ENCODE measurements at regions of chr7 and their contacts with region 1.

Region 1: GRCh38 chr7:74083117-74083876 is at the start of gene LIMK1:
- DNase-seq: peak; percentile 68 to 91 (median 81)
- ATAC-seq: peak; percentile 97
- H3K4me3 ChIP-seq: peak within 1 kb of the TSS; percentile 61
- H3K4me3 Mint-ChIP-seq: peak within 1 kb of the TSS; percentile 81
- H3K27ac ChIP-seq: peak within 1 kb of the TSS in 1 of 2 experiments; percentile 36
- H3K27ac Mint-ChIP-seq: no peak within 1 kb of the TSS
- H3K4me1 ChIP-seq: peaks cover 12% of the 10 kb centered on the region
- H3K4me1 Mint-ChIP-seq: peaks cover 9% of the 10 kb centered on the region
- H3K27me3 ChIP-seq: no peaks in the 10 kb centered on the region
- H3K27me3 Mint-ChIP-seq: no peaks in the 10 kb centered on the region
- CTCF ChIP-seq: no peak
- total RNA-seq, gene LIMK1: 12.8 to 13.7 TPM

Region 2: DNA sequence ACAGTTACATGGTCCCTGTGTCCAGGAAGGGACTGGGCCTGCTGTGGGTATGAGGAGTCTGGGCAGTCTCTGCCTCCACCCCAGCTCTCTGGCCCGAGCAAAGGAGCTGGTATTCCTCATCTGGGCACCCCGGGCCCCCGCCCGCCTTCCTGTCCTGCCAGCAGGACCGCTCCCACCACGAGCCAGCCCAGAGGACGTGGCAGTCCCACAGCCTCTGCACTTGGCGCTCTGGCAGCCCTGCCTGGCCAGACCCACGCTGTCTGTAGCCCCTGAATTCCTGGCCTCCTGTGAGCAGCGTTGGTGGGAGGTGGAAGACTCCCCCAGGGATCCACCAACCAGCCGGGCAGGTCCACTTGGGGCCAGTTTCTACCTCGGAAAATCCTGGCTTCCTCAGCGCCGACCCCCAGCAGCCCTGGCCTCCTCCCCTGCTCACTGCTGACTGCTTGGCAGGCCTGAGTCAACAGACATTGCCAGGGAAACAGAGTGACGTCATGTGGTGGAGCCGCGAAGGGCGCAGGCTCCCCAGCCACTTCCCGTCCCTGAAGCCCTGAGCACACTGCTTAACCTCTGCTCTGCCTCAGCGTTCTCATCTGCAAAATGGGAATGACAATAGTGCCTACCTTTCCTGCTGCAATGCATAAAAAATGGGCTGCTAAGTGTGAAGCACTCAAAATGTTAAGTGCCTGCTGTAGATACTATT is 21.3 kb before region 1 on chr7:
- CTCF ChIA-PET with region 1: interaction called, 3 read pairs
- POLR2A ChIA-PET with region 1: no interaction called
- intact Hi-C with region 1: loop called in 1 of 2 experiments (anchors 1 kb)
- DNase-seq: peak; percentile 53 to 90 (median 71)
- ATAC-seq: peak; percentile 98
- H3K4me3 ChIP-seq: no peak overlapping the region
- H3K4me3 Mint-ChIP-seq: peak overlapping the region; percentile 5
- H3K27ac ChIP-seq: peak overlapping the region; percentile 52 to 61
- H3K27ac Mint-ChIP-seq: peak overlapping the region; percentile 41
- H3K4me1 ChIP-seq: no peaks in the 10 kb centered on the region
- H3K4me1 Mint-ChIP-seq: peaks cover 4% of the 10 kb centered on the region
- H3K27me3 ChIP-seq: no peaks in the 10 kb centered on the region
- H3K27me3 Mint-ChIP-seq: peaks cover 7% of the 10 kb centered on the region
- CTCF ChIP-seq: no peak

Region 3: GRCh38 chr7:74094224-74095101 is 11.2 kb after region 1 on chr7:
- CTCF ChIA-PET with region 1: no interaction called
- POLR2A ChIA-PET with region 1: interaction called, 9 read pairs
- intact Hi-C with region 1: loop called in 1 of 2 experiments (anchors 1 kb)
- DNase-seq: peak; percentile 34 to 88 (median 78)
- ATAC-seq: peak; percentile 74
- H3K4me3 ChIP-seq: peak overlapping the region; percentile 43 to 57
- H3K4me3 Mint-ChIP-seq: peak overlapping the region; percentile 83
- H3K27ac ChIP-seq: peak overlapping the region; percentile 72 to 89
- H3K27ac Mint-ChIP-seq: peak overlapping the region; percentile 94
- H3K4me1 ChIP-seq: peaks cover 27% of the 10 kb centered on the region
- H3K4me1 Mint-ChIP-seq: peaks cover 23% of the 10 kb centered on the region
- H3K27me3 ChIP-seq: no peaks in the 10 kb centered on the region
- H3K27me3 Mint-ChIP-seq: no peaks in the 10 kb centered on the region
- CTCF ChIP-seq: no peak

Region 4: DNA sequence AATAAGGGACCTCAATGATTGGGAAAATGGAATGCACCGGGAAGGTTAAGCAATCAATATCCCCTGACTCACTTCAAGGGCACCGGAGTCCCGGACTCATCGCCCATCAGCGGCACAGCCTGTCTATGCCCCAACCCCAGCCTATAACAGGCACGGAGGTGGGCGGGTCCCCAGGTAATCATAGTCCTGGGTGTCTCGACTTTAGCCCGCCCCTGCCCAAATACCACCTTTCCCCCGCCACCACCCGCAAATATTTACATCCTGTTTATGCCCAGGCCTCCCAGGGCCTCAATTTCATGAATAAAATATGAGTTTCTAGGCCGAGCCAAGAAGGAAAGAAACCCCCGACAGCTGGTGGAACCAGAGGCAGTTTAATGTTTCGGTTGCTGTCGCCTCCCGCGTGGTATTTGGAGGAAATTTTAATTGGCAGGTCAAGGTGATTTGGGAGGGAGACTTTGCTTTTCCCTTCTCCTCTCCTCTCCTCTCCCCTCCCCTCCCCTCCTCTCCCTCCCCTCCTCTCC is 186.5 kb after region 1 on chr7:
- CTCF ChIA-PET with region 1: no interaction called
- POLR2A ChIA-PET with region 1: no interaction called
- intact Hi-C with region 1: loop called in 1 of 2 experiments (anchors 1 kb)
- DNase-seq: peak; percentile 25 to 83 (median 65)
- ATAC-seq: peak; percentile 93
- H3K4me3 ChIP-seq: peak overlapping the region; percentile 50 to 61
- H3K4me3 Mint-ChIP-seq: peak overlapping the region; percentile 88
- H3K27ac ChIP-seq: no peak overlapping the region
- H3K27ac Mint-ChIP-seq: no peak overlapping the region
- H3K4me1 ChIP-seq: no peaks in the 10 kb centered on the region
- H3K4me1 Mint-ChIP-seq: peaks cover 7% of the 10 kb centered on the region
- H3K27me3 ChIP-seq: no peaks in the 10 kb centered on the region
- H3K27me3 Mint-ChIP-seq: peaks cover 5% of the 10 kb centered on the region
- CTCF ChIP-seq: no peak

Measured in CD8-positive, alpha-beta T cell (primary cell).